A673 (cell line): ENCODE measurements at regions of chr4 and their contacts with region 1.

Region 1: DNA sequence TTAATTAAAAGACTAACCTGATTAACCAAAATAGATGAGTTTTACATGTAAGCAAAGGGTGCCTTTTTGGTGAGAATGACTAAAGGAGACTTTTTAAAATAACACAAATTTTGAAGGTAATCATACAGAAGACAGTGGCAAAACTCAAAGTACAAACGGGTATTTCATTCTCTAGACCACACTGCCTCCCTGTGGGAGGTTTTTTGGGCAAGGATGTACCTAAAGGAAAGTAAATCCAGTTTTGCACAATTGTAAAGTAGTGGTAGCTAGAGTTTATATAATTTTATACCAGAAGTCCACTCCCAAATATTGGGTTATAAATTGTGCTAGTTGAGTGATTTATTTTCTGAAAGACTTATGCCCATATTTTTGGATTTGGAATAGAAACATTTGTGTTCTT is 201.0 kb downstream of the PAPSS1 start:
- DNase-seq: peak; percentile 83
- H3K4me3 ChIP-seq: no peak overlapping the region
- H3K27ac ChIP-seq: peak overlapping the region; percentile 46
- H3K4me1 ChIP-seq: peaks cover 16% of the 10 kb centered on the region
- H3K27me3 ChIP-seq: no peaks in the 10 kb centered on the region
- CTCF ChIP-seq: peak; percentile 80

Region 2: DNA sequence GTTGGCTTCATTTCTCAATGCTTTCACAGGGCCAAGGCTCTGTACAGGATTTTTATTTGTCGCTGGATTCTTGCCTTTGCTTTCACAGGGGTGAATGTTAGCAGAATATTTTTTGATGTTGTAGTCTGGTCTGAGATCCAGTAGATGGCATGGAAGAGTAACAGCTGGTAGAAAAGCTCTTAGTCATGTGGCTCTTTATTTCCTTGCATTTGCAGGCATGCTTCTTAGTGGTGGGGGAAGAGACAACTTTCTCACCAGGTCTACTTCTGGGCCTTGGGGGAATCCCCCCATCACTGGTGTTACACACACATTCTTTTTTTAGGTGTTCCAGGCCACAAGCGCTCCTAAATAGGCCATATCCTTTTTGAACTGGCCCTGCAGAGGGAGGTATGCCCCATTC is 424.7 kb before region 1 on chr4:
- CTCF ChIA-PET with region 1: no interaction called
- POLR2A ChIA-PET with region 1: no interaction called
- intact Hi-C with region 1: loop called (anchors 2 kb)
- DNase-seq: peak; percentile 82
- H3K4me3 ChIP-seq: no peak overlapping the region
- H3K27ac ChIP-seq: peak overlapping the region; percentile 71
- H3K4me1 ChIP-seq: peaks cover 20% of the 10 kb centered on the region
- H3K27me3 ChIP-seq: no peaks in the 10 kb centered on the region
- CTCF ChIP-seq: peak; percentile 69

Region 3: GRCh38 chr4:107164962-107165475 is 354.0 kb before region 1 on chr4:
- CTCF ChIA-PET with region 1: no interaction called
- POLR2A ChIA-PET with region 1: no interaction called
- intact Hi-C with region 1: loop called (anchors 5 kb)
- DNase-seq: peak; percentile 96
- H3K4me3 ChIP-seq: no peak overlapping the region
- H3K27ac ChIP-seq: peak overlapping the region; percentile 98
- H3K4me1 ChIP-seq: peaks cover 34% of the 10 kb centered on the region
- H3K27me3 ChIP-seq: no peaks in the 10 kb centered on the region
- CTCF ChIP-seq: no peak

Region 4: GRCh38 chr4:107348188-107349050 is 170.6 kb before region 1 on chr4:
- CTCF ChIA-PET with region 1: no interaction called
- POLR2A ChIA-PET with region 1: no interaction called
- intact Hi-C with region 1: no loop called
- DNase-seq: peak; percentile 44
- H3K4me3 ChIP-seq: no peak overlapping the region
- H3K27ac ChIP-seq: no peak overlapping the region
- H3K4me1 ChIP-seq: peaks cover 9% of the 10 kb centered on the region
- H3K27me3 ChIP-seq: no peaks in the 10 kb centered on the region
- CTCF ChIP-seq: no peak

Region 5: GRCh38 chr4:107392951-107393350 is 126.1 kb before region 1 on chr4:
- CTCF ChIA-PET with region 1: no interaction called
- POLR2A ChIA-PET with region 1: no interaction called
- intact Hi-C with region 1: loop called (anchors 2 kb)
- DNase-seq: peak; percentile 67
- H3K4me3 ChIP-seq: no peak overlapping the region
- H3K27ac ChIP-seq: peak overlapping the region; percentile 90
- H3K4me1 ChIP-seq: peaks cover 52% of the 10 kb centered on the region
- H3K27me3 ChIP-seq: no peaks in the 10 kb centered on the region
- CTCF ChIP-seq: no peak

Region 6: GRCh38 chr4:107736924-107737448 is 217.9 kb after region 1 on chr4:
- CTCF ChIA-PET with region 1: no interaction called
- POLR2A ChIA-PET with region 1: no interaction called
- intact Hi-C with region 1: loop called (anchors 5 kb)
- DNase-seq: peak; percentile 69
- H3K4me3 ChIP-seq: no peak overlapping the region
- H3K27ac ChIP-seq: no peak overlapping the region
- H3K4me1 ChIP-seq: peaks cover 37% of the 10 kb centered on the region
- H3K27me3 ChIP-seq: no peaks in the 10 kb centered on the region
- CTCF ChIP-seq: peak; percentile 88